Aorta (tissue), 5 donors: ENCODE measurements at regions of chr3 and their contacts with region 1.

Region 1: DNA sequence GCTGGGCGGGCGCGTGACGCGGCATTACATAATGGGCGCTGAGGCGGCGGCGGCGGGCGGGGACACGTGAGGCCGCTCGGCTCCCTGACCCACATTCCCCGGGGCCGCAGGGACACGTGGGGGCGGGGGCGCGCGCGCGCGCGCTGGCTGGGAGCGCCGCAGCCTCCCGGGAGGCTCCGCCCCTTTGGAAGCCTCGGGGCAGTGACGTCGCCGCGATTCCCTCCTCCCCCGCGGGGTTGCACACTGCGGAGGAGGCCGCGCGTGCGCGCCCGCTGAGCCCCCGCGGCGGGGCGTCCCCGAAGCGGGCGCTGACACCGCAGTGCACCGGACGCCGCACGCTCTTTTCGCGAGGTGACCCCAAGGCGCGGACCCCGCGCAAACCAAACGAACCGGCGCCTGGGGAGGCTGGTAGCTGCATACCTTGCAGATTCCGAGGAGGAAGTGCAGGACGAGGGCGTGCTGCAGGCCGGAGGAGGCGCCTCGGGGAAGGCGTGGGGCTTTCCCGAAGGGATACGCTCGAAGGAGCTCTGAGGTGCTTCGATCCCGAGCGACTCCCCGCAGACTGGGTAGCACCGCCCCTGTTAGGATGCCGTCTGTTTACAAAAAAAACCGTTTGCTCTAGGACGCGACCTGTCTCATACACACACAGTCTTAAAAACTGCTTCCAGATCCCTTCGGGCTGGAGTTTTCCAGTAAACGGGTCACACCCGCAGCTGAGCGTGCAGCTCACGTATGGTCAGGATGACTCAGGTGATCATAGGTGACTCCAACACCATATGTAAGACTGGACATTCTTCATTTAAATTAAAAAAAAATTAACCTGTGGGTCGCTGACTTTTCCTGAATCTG is 1.0 kb downstream of the NR1D2 start:
- DNase-seq: peak; percentile 98 to 99
- ATAC-seq: peak; percentile 96
- H3K4me3 ChIP-seq: peak overlapping the region; percentile 30 to 74
- H3K27ac ChIP-seq: peak overlapping the region; percentile 61 to 89
- H3K4me1 ChIP-seq: peaks cover 0 to 7% of the 10 kb centered on the region in 2 donors
- H3K27me3 ChIP-seq: no peaks in the 10 kb centered on the region

Region 2: DNA sequence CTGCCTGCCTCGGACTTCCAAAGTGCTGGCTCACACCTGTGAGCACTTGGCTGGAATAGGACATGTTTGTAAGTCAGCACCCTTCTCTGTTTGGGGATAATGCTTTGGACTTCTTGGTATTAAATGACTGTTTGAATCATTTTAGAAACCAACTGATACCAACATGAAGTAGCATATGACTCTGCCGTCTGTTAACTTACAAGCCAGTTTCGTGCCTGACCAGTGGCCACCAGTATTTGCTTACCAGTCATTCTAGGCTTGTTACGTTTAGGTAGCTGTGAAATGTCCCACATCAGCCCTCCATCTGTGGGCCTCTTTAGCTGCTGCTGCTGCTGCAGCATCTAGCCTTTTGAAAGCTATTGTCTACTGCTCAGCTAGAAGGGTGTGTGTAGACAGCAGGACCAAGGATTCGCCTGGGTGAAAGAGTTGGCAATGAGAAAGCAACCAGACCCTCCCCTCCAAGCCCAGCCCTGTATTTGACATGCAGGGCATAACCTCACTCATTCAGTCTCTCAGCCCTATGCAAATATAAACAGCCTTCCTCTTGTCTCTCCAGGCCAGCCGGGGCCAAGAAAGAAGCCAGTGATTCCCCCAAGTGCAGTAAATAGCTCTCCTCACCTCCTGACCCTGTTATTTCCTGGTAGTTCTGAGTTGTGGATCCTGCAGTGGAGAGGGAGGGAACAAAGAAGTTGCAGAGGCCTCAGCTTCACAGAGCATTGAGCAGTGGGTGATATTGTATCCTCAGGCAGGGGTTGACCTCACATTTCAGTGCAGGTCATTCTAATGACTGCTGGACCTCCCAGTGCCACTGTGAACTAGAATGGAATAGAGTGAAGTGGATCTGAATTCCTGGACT is 80.3 kb before region 1 on chr3:
- intact Hi-C with region 1: no loop called
- DNase-seq: no peak
- ATAC-seq: peak; percentile 69
- H3K4me3 ChIP-seq: no peak overlapping the region
- H3K27ac ChIP-seq: no peak overlapping the region
- H3K4me1 ChIP-seq: peaks cover 0 to 6% of the 10 kb centered on the region in 2 donors
- H3K27me3 ChIP-seq: no peaks in the 10 kb centered on the region

Region 3: DNA sequence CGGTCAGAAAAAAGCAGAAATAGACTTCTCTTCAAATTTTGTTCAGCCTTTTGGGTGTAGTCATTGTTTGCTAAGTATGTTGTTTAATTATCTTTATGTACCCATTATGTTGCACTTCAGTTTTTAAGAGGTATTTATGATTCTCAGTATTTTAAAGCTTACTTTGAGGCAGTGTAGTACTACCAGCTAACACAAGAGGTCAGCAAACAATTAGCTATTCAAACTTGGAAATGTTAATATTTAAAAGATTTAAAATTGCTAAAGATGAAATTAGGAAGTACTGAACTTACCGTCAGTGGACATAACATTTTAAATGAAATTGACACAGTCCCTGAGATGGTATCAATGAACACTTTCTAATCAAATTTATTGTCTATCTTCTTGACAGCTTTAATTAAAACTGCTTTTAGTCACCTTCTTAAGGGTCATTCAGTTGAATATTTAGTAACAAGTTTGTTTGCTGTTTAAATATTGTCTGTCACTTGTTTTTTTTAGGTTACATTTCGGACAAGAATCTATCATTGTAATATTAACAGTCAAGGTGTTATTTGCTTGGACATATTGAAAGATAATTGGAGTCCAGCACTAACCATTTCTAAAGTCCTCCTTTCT is 57.4 kb before region 1 on chr3:
- intact Hi-C with region 1: no loop called
- DNase-seq: no peak
- ATAC-seq: no peak
- H3K4me3 ChIP-seq: no peak overlapping the region
- H3K27ac ChIP-seq: no peak overlapping the region
- H3K4me1 ChIP-seq: no peaks in the 10 kb centered on the region
- H3K27me3 ChIP-seq: no peaks in the 10 kb centered on the region

Region 4: DNA sequence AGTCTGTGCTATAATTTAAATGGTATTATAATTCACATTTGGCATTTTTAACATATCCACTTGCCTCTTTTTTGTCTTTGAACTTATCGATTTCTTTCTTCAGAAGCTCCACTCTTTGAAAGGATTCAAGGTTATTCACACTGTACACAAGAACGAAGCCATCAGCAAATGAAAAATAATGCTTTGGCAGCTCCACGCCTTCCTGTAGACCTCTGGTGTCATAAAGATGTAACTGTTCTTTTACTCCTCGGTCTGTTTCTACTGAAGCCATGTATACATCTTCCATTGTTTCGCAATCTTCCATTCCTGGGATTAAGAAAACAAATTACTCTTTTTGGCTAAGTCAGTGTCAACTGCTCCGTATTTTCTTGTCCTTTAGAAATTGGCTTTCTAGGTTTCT is 45.4 kb before region 1 on chr3:
- intact Hi-C with region 1: no loop called
- DNase-seq: no peak
- ATAC-seq: no peak
- H3K4me3 ChIP-seq: no peak overlapping the region
- H3K27ac ChIP-seq: no peak overlapping the region
- H3K4me1 ChIP-seq: no peaks in the 10 kb centered on the region
- H3K27me3 ChIP-seq: no peaks in the 10 kb centered on the region

Region 5: GRCh38 chr3:23916886-23917678 is 29.0 kb before region 1 on chr3 and contains the starts of genes NKIRAS1 and RPL15:
- intact Hi-C with region 1: loop called in 1 of 2 experiments (anchors 1 kb)
- DNase-seq: peak; percentile 99
- ATAC-seq: peak; percentile 99
- H3K4me3 ChIP-seq: peak within 1 kb of the TSS; percentile 55 to 83
- H3K27ac ChIP-seq: peak within 1 kb of the TSS; percentile 4 to 65
- H3K4me1 ChIP-seq: peaks cover 0 to 8% of the 10 kb centered on the region in 2 donors
- H3K27me3 ChIP-seq: no peaks in the 10 kb centered on the region
- total RNA-seq, gene NKIRAS1: 10.9 to 11.9 TPM
- total RNA-seq, gene RPL15: 1,314 to 1,433 TPM

Region 6: DNA sequence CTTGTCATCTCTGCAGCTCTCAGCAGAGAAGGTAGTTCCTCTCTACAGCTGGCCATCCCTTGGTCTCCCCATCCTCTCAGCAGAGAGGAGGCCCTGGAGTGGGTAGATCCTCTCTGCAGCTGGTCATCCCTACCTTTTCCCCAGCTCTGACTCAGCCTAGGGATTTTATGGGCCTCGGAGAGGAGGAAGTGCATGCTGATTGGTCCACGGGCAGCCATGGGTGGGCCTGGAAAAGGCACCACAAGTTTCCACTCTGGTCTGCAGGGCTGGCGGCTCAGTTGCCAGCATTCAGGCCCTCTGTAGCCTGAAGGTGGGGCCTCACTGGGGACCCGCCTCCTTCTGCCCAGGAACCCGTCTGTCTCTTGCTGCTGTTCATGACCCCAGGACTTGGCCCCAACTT is 35.8 kb after region 1 on chr3:
- intact Hi-C with region 1: loop called in 1 of 2 experiments (anchors 5 kb)
- DNase-seq: no peak
- ATAC-seq: peak; percentile 45
- H3K4me3 ChIP-seq: no peak overlapping the region
- H3K27ac ChIP-seq: no peak overlapping the region
- H3K4me1 ChIP-seq: no peaks in the 10 kb centered on the region
- H3K27me3 ChIP-seq: no peaks in the 10 kb centered on the region